OCI-LY7 (cell line): ENCODE measurements at regions of chr6 and their contacts with region 1.

Region 1: GRCh38 chr6:16432075-16433032 is 194.0 kb downstream of the GMPR start:
- DNase-seq: no peak
- H3K4me3 ChIP-seq: no peak overlapping the region
- H3K27ac ChIP-seq: no peak overlapping the region
- H3K4me1 ChIP-seq: peaks cover 30% of the 10 kb centered on the region
- CTCF ChIP-seq: no peak

Region 2: DNA sequence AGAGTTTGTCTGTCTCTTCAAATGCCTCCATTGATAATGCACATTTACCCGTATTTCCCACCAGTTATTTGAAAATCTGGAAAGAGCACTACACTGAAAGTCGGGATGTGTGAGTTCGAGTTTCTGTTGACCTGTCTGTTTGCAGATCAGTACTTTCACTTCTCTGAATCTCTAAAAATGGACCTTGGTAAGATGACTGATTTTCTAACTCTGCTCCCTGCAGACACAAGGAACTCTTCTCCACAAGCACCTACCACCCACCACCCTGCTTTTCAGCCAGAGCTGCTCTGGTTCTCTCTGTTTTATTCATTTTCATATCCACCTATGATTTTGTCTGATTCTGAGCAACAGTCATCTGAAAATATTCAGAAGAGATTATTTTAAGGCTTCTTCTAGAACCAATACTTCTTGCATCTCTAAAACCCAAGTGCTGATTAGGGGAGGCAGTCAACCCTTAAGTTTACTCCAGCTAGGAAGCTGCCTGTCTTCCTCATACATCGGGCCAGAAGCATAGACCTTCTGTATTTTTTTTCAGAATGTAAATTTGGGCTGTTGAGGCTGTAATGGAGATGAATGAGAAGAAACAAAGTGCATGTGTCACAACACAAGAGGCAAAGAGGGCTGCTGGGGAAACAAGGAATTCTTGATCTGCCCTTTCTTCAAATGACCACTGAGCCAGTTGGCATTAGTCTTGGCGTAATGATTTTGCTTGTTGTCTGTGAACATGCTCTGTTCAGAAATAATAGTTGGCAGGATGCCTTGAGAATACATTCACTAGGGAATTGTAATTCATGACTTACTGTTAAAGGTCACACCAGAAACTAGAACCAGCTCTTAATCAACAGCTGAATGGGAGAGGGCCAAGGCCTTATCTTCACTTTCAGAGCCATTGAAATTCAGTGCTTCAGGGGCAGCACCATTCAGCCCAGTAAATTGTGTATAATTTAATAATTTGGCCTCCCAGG is 388.9 kb before region 1 on chr6:
- CTCF ChIA-PET with region 1: no interaction called
- POLR2A ChIA-PET with region 1: no interaction called
- intact Hi-C with region 1: no loop called
- DNase-seq: no peak
- H3K4me3 ChIP-seq: no peak overlapping the region
- H3K27ac ChIP-seq: no peak overlapping the region
- H3K4me1 ChIP-seq: no peaks in the 10 kb centered on the region
- CTCF ChIP-seq: no peak

Region 3: DNA sequence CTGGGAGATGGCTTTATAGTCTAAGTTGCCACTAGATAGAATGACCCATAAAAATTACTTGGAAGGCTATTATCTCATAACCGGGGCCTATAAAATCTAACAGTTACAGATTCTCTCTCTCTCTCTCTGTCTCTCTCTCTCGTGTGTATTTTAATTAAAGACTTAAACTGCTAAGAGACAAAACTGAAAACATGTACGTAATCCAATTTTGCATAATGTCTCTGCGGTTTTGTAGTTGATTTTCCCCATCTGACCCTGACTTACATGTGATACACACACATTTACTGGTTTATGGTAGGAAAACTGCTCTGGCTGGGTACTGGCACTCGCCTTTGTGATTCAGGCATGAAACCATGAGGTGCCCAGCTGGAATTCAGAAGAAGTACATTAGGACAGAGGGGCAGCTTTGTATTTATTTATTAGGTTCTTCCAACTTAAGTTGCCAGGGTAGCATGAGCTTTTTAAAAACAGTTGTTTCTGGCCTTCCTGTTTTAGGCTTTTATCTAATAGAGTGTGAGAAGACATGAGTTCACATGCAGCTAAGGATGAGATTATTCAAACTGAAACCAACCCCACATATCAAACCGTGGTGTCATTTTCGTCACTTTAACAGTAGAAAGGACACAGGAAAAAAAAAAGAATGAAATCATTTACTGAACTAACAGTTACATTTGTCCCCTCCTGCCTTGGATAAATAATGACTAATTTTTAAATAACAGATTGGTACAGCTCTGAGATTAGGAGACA is 11.5 kb before region 1 on chr6:
- CTCF ChIA-PET with region 1: no interaction called
- POLR2A ChIA-PET with region 1: interaction called, 14 read pairs
- intact Hi-C with region 1: no loop called
- DNase-seq: peak; percentile 30
- H3K4me3 ChIP-seq: peak overlapping the region; percentile 25
- H3K27ac ChIP-seq: peak overlapping the region; percentile 34
- H3K4me1 ChIP-seq: peaks cover 26% of the 10 kb centered on the region
- CTCF ChIP-seq: no peak

Region 4: DNA sequence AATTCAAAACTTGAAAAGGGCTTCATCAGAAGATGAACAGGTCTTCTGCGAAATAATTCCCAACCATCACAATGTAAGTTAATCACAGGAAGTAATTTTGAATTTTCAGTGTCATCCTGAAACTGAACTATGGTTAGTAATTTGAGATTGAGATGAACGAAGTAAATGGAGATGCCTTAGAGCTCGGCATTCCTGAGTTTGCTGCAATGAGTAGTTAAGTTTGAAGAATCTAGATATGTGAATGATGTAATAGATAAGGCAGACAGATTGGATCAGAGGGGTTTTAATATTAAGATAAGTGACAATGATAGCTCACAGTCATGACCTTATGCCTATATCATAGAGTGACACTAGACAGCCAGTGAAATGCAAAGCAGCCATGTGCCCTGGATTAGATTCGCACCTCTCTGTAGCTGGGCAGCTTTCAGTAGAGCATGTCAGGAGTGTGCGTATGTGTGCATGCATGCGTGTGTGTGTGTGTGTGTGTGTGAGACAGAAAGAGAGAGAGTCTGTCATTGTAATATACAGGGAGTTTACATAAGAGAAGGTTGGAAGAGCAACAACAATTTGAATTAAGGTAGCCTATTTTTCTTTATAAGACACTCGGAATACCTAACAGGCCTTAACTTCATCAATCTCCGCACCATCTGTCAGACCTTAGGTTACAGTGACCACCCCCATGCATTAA is 39.0 kb after region 1 on chr6:
- CTCF ChIA-PET with region 1: no interaction called
- POLR2A ChIA-PET with region 1: interaction called, 3 read pairs
- intact Hi-C with region 1: loop called (anchors 5 kb)
- DNase-seq: no peak
- H3K4me3 ChIP-seq: no peak overlapping the region
- H3K27ac ChIP-seq: no peak overlapping the region
- H3K4me1 ChIP-seq: no peaks in the 10 kb centered on the region
- CTCF ChIP-seq: no peak

Region 5: DNA sequence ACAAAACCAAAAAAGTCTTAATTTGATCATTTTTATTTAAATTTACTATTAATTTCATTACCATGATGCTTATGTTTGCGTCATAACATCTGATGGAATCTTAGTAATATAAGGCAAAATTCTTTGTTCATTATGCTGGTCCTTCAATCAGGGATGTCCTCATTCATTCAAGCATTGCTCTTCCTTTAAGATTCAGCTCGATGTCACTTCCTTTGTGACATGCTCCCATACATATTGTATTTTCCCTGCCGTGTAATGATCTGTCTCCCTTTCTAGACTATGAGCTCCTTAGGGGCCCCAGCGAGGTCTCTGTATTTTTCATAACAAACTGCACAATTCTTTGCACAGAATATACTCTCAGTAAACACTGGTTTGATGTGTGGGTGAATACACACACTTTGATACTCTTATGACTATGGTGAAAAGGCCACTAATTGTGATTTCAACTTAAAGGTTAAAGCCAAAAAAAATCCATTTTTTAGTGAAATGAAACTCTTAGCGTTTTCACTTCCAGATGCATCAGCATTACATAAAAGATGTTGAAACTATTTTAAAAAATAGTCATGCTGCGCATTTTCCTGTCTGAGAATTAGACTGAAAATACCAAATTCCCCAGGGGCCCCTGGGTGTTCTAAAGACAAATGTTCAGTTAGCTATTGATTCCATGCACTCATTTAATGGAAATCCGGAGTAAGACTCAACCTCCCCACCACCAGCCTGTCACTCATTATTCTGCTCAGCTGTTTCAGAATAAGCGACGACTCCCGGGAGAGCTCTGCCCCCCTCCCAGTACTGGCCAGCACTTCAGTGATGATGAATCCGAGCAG is 159.3 kb after region 1 on chr6:
- CTCF ChIA-PET with region 1: no interaction called
- POLR2A ChIA-PET with region 1: no interaction called
- intact Hi-C with region 1: loop called (anchors 2 kb)
- DNase-seq: peak; percentile 10
- H3K4me3 ChIP-seq: no peak overlapping the region
- H3K27ac ChIP-seq: no peak overlapping the region
- H3K4me1 ChIP-seq: no peaks in the 10 kb centered on the region
- CTCF ChIP-seq: no peak